ENCODE measurements at regions of chr11 and their contacts with region 1.

Region 1: GRCh38 chr11:108647701-108648527 is 17.0 kb upstream of the DDX10 start:
- DNase-seq: peak; percentile 24 to 78 (median 64)
- ATAC-seq: peak; percentile 89
- H3K4me3 ChIP-seq: no peak overlapping the region
- H3K4me3 Mint-ChIP-seq: no peak overlapping the region
- H3K27ac ChIP-seq: no peak overlapping the region
- H3K27ac Mint-ChIP-seq: no peak overlapping the region
- H3K4me1 ChIP-seq: no peaks in the 10 kb centered on the region
- H3K4me1 Mint-ChIP-seq: no peaks in the 10 kb centered on the region
- H3K27me3 ChIP-seq: no peaks in the 10 kb centered on the region
- H3K27me3 Mint-ChIP-seq: peaks cover 5% of the 10 kb centered on the region
- CTCF ChIP-seq: peak; percentile 71

Region 2: GRCh38 chr11:107916671-107917241 is 731.2 kb before region 1 on chr11:
- CTCF ChIA-PET with region 1: no interaction called
- POLR2A ChIA-PET with region 1: no interaction called
- intact Hi-C with region 1: loop called (anchors 2 to 5 kb)
- DNase-seq: peak in 5 of 9 experiments; percentile 22 to 58 (median 51)
- ATAC-seq: no peak
- H3K4me3 ChIP-seq: no peak overlapping the region
- H3K4me3 Mint-ChIP-seq: no peak overlapping the region
- H3K27ac ChIP-seq: no peak overlapping the region
- H3K27ac Mint-ChIP-seq: no peak overlapping the region
- H3K4me1 ChIP-seq: no peaks in the 10 kb centered on the region
- H3K4me1 Mint-ChIP-seq: no peaks in the 10 kb centered on the region
- H3K27me3 ChIP-seq: no peaks in the 10 kb centered on the region
- H3K27me3 Mint-ChIP-seq: peaks cover 18% of the 10 kb centered on the region
- CTCF ChIP-seq: peak; percentile 64

Region 3: DNA sequence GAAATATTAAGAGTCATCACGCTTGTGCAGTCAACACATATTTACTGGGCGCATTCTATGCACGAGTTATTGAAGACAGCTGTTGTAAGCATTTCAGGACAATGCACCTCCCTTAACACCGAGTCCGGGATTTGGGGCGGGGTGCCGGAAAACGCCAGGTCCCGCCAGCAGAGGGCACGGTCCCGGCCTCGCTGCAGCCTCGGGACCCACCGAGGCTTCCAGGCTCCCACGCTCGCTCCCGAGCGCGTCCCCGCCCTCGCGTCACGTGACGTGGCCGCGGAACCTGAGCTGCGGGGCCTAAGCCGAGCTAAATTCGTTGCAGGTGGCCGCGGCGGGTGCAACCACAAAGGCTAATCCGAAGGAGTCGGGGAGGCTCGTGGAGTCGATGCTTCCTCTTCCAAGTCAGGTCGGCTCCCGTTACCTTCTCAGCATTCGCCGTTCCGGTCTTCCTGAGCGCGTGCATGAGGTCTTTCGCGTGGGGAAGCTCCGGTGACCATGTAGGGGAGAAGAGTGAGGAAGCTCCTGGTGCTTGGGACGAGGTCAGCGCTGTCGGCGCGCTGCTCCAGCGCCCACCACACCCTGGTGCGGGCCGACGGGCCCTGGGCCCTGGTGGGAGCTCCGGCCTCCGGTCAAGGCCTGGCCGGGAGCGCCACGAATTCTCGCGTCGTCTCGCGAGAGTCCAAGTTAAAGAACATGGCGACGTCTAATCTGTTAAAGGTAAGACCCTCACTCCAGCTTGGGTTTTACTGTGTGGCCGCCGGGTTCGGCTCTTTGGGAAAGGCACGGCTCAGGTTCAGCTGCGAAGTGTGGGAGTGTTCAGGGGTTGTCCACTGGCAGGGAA is 639.0 kb before region 1 on chr11 and contains the start of gene CUL5:
- CTCF ChIA-PET with region 1: interaction called, 7 read pairs
- POLR2A ChIA-PET with region 1: no interaction called
- intact Hi-C with region 1: loop called (anchors 1 to 5 kb)
- DNase-seq: peak; percentile 83 to 95 (median 89)
- ATAC-seq: peak; percentile 88
- H3K4me3 ChIP-seq: peak within 1 kb of the TSS; percentile 99
- H3K4me3 Mint-ChIP-seq: no peak within 1 kb of the TSS
- H3K27ac ChIP-seq: peak within 1 kb of the TSS; percentile 97 to 98
- H3K27ac Mint-ChIP-seq: peak within 1 kb of the TSS; percentile 98
- H3K4me1 ChIP-seq: peaks cover 24% of the 10 kb centered on the region
- H3K4me1 Mint-ChIP-seq: peaks cover 3% of the 10 kb centered on the region
- H3K27me3 ChIP-seq: no peaks in the 10 kb centered on the region
- H3K27me3 Mint-ChIP-seq: no peaks in the 10 kb centered on the region
- CTCF ChIP-seq: peak; percentile 70
- total RNA-seq, gene CUL5: 73.3 to 75.0 TPM

Region 4: DNA sequence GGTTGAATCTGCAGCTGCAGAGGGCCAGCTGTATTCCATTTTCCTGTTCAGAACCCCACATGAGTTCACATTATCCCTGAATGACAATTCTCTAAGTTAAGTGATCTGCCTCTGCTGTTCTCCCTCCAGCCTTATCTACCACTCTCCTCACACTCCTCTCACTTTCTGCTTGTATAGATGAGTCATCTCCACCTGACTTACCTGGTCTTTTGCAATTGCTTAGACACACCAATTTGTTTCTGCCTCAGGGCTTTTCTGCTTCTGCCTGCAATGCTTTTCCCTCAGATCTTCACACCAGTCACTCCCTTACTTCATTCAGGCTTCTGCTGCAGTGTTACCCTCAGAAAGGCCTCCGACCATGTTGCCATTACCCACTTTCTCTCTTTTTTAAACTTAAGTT is 306.9 kb before region 1 on chr11:
- CTCF ChIA-PET with region 1: interaction called, 4 read pairs
- POLR2A ChIA-PET with region 1: no interaction called
- intact Hi-C with region 1: loop called (anchors 2 to 5 kb)
- DNase-seq: no peak
- ATAC-seq: no peak
- H3K4me3 ChIP-seq: no peak overlapping the region
- H3K4me3 Mint-ChIP-seq: no peak overlapping the region
- H3K27ac ChIP-seq: no peak overlapping the region
- H3K27ac Mint-ChIP-seq: peak overlapping the region; percentile 88
- H3K4me1 ChIP-seq: no peaks in the 10 kb centered on the region
- H3K4me1 Mint-ChIP-seq: peaks cover 39% of the 10 kb centered on the region
- H3K27me3 ChIP-seq: no peaks in the 10 kb centered on the region
- H3K27me3 Mint-ChIP-seq: no peaks in the 10 kb centered on the region
- CTCF ChIP-seq: no peak

Region 5: DNA sequence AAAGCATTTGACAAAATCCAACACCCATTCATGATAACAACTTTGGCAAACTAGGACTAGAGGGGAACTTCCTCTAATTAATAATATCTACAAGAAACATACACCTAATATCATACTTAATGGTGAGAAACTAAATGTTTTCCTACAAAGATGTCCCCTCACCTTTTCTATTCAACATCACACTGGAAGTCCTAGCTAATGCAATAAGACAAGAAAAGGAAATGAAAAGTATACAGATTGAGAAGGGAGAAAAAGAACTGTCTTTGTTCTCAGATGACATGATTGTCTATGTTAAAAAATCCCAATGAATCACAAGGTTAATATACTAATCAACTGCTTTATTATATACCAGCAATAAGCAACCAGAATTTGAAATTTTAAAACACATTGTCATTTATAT is 233.0 kb before region 1 on chr11:
- CTCF ChIA-PET with region 1: interaction called, 8 read pairs
- POLR2A ChIA-PET with region 1: no interaction called
- intact Hi-C with region 1: loop called in 1 of 2 experiments (anchors 2 kb)
- DNase-seq: no peak
- ATAC-seq: no peak
- H3K4me3 ChIP-seq: no peak overlapping the region
- H3K4me3 Mint-ChIP-seq: no peak overlapping the region
- H3K27ac ChIP-seq: no peak overlapping the region
- H3K27ac Mint-ChIP-seq: no peak overlapping the region
- H3K4me1 ChIP-seq: no peaks in the 10 kb centered on the region
- H3K4me1 Mint-ChIP-seq: no peaks in the 10 kb centered on the region
- H3K27me3 ChIP-seq: no peaks in the 10 kb centered on the region
- H3K27me3 Mint-ChIP-seq: no peaks in the 10 kb centered on the region
- CTCF ChIP-seq: no peak

Region 6: DNA sequence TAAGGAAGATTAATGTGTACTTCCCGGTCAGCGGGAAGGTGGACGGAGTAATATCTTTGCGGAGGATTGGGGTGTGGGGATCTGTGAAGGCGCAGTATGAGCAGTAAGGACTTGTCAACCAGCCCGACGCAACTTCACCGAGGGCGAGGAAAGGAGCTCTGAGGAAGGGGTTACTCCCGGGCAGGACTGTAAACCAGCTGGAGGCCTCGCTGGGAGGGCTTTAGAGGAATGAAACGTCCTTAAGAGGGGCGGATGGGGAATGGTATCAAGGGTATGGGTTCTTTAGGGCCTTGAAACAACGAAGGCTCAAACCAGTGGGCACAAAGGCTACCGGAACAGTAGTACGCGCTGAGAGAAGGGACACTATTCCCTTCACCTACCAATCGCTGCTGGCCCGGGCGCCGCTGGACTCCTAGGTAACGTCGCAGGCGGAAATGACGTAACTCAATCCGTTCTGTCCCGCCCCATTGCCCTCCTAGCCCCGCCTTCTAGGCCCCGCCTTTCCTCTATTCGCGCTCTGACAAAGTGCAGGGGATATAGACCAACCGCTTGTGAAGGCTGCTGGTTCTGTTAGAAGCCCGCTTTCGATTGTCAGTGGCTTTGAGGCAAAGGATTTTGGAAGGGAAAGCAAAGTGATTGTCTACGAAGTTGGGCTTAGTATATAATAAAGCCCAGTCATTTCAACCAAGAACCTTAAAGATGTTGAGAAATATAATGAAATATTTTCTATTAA is 180.7 kb before region 1 on chr11 and contains the start of gene C11orf65:
- CTCF ChIA-PET with region 1: no interaction called
- POLR2A ChIA-PET with region 1: no interaction called
- intact Hi-C with region 1: no loop called
- DNase-seq: peak; percentile 93 to 98 (median 95)
- ATAC-seq: peak; percentile 96
- H3K4me3 ChIP-seq: peak within 1 kb of the TSS; percentile 65 to 66
- H3K4me3 Mint-ChIP-seq: peak within 1 kb of the TSS; percentile 98
- H3K27ac ChIP-seq: peak within 1 kb of the TSS; percentile 93 to 94
- H3K27ac Mint-ChIP-seq: peak within 1 kb of the TSS; percentile 100
- H3K4me1 ChIP-seq: peaks cover 14% of the 10 kb centered on the region
- H3K4me1 Mint-ChIP-seq: peaks cover 8% of the 10 kb centered on the region
- H3K27me3 ChIP-seq: no peaks in the 10 kb centered on the region
- H3K27me3 Mint-ChIP-seq: no peaks in the 10 kb centered on the region
- CTCF ChIP-seq: no peak
- total RNA-seq, gene C11orf65: 0.31 TPM in 1 of 2 experiments, not detected in the other

Region 7: DNA sequence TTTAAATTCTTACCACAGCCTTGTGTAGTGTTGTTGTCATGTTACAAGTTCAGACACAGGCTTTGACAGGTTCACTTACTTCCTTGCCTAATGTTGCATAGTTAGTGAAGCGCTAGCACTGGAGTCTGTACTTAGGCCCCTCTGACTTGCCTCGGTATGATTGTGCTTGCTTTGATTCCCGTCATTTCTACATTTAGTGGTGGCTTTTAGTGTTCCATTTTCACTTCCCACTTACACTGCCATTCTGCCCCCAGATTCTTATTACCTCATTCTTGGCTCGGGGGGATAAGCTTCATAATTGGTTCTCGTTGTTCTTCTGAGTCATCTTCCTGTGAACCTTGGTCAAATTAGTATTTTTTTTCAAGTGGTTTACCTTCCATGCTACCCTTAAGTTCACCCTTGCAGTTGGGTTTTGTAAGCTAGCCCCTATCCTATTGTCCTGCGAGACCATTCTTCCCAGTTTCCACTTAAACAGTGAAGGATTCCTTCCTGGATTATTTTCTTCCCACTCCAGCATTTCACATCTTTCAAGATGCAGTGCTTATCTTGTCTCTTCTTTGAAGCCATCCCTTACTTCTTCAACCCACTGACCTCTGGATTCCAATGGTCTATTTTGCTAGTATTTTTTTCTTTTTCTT is 85.7 kb after region 1 on chr11:
- CTCF ChIA-PET with region 1: no interaction called
- POLR2A ChIA-PET with region 1: no interaction called
- intact Hi-C with region 1: no loop called
- DNase-seq: peak in 2 of 9 experiments; percentile 25 to 46
- ATAC-seq: peak; percentile 82
- H3K4me3 ChIP-seq: no peak overlapping the region
- H3K4me3 Mint-ChIP-seq: peak overlapping the region; percentile 5
- H3K27ac ChIP-seq: no peak overlapping the region
- H3K27ac Mint-ChIP-seq: peak overlapping the region; percentile 30
- H3K4me1 ChIP-seq: peaks cover 13% of the 10 kb centered on the region
- H3K4me1 Mint-ChIP-seq: peaks cover 31% of the 10 kb centered on the region
- H3K27me3 ChIP-seq: no peaks in the 10 kb centered on the region
- H3K27me3 Mint-ChIP-seq: no peaks in the 10 kb centered on the region
- CTCF ChIP-seq: no peak

Region 8: GRCh38 chr11:108790501-108791299 is 142.8 kb after region 1 on chr11:
- CTCF ChIA-PET with region 1: no interaction called
- POLR2A ChIA-PET with region 1: no interaction called
- intact Hi-C with region 1: no loop called
- DNase-seq: no peak
- ATAC-seq: no peak
- H3K4me3 ChIP-seq: no peak overlapping the region
- H3K4me3 Mint-ChIP-seq: no peak overlapping the region
- H3K27ac ChIP-seq: no peak overlapping the region
- H3K27ac Mint-ChIP-seq: no peak overlapping the region
- H3K4me1 ChIP-seq: peaks cover 6% of the 10 kb centered on the region
- H3K4me1 Mint-ChIP-seq: peaks cover 42% of the 10 kb centered on the region
- H3K27me3 ChIP-seq: no peaks in the 10 kb centered on the region
- H3K27me3 Mint-ChIP-seq: no peaks in the 10 kb centered on the region
- CTCF ChIP-seq: no peak

Region 9: GRCh38 chr11:108825381-108825780 is 177.5 kb after region 1 on chr11:
- CTCF ChIA-PET with region 1: no interaction called
- POLR2A ChIA-PET with region 1: no interaction called
- intact Hi-C with region 1: no loop called
- DNase-seq: no peak
- ATAC-seq: no peak
- H3K4me3 ChIP-seq: no peak overlapping the region
- H3K4me3 Mint-ChIP-seq: no peak overlapping the region
- H3K27ac ChIP-seq: no peak overlapping the region
- H3K27ac Mint-ChIP-seq: no peak overlapping the region
- H3K4me1 ChIP-seq: no peaks in the 10 kb centered on the region
- H3K4me1 Mint-ChIP-seq: peaks cover 6% of the 10 kb centered on the region
- H3K27me3 ChIP-seq: no peaks in the 10 kb centered on the region
- H3K27me3 Mint-ChIP-seq: no peaks in the 10 kb centered on the region
- CTCF ChIP-seq: no peak